CD4-positive, alpha-beta T cell (primary cell): ENCODE measurements at regions of chr5 and their contacts with region 1.

Region 1: GRCh38 chr5:131258733-131259132 is 5.1 kb upstream of the CDC42SE2 start:
- DNase-seq: no peak
- ATAC-seq: no peak
- H3K4me3 ChIP-seq: no peak overlapping the region
- H3K4me3 Mint-ChIP-seq: peak overlapping the region; percentile 70
- H3K27ac ChIP-seq: peak overlapping the region; percentile 58 to 66
- H3K27ac Mint-ChIP-seq: peak overlapping the region; percentile 90
- H3K4me1 ChIP-seq: peaks cover 57% of the 10 kb centered on the region
- H3K4me1 Mint-ChIP-seq: peaks cover 73% of the 10 kb centered on the region
- H3K27me3 ChIP-seq: no peaks in the 10 kb centered on the region
- H3K27me3 Mint-ChIP-seq: no peaks in the 10 kb centered on the region
- CTCF ChIP-seq: no peak

Region 2: DNA sequence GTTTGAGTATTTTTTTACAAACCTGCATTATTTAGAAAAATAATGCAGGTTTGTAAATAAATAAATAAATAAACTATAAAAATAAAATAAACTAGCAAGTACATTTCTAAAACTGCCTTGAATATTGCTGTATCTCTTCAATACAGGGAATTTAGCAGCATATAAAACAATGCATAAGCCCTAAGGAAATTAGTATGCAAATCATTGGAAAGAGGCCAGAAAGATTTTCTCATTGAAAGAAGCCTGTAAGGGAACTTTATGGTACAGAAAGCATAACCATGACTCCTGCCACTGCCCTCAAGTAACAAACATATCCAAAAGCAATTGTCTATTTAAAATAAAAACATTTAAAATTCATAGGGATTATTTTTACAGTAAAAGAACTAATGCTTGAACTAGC is 480.9 kb before region 1 on chr5:
- CTCF ChIA-PET with region 1: no interaction called
- POLR2A ChIA-PET with region 1: no interaction called
- intact Hi-C with region 1: no loop called
- DNase-seq: no peak
- ATAC-seq: no peak
- H3K4me3 ChIP-seq: no peak overlapping the region
- H3K4me3 Mint-ChIP-seq: no peak overlapping the region
- H3K27ac ChIP-seq: no peak overlapping the region
- H3K27ac Mint-ChIP-seq: no peak overlapping the region
- H3K4me1 ChIP-seq: no peaks in the 10 kb centered on the region
- H3K4me1 Mint-ChIP-seq: no peaks in the 10 kb centered on the region
- H3K27me3 ChIP-seq: peaks cover 0 to 7% of the 10 kb centered on the region in 2 experiments
- H3K27me3 Mint-ChIP-seq: peaks cover 40% of the 10 kb centered on the region
- CTCF ChIP-seq: no peak

Region 3: GRCh38 chr5:131218392-131218791 is 40.3 kb before region 1 on chr5:
- CTCF ChIA-PET with region 1: no interaction called
- POLR2A ChIA-PET with region 1: interaction called, 9 read pairs
- intact Hi-C with region 1: loop called in 1 of 2 experiments (anchors 5 kb)
- DNase-seq: no peak
- ATAC-seq: no peak
- H3K4me3 ChIP-seq: no peak overlapping the region
- H3K4me3 Mint-ChIP-seq: no peak overlapping the region
- H3K27ac ChIP-seq: no peak overlapping the region
- H3K27ac Mint-ChIP-seq: no peak overlapping the region
- H3K4me1 ChIP-seq: peaks cover 8% of the 10 kb centered on the region
- H3K4me1 Mint-ChIP-seq: peaks cover 36% of the 10 kb centered on the region
- H3K27me3 ChIP-seq: no peaks in the 10 kb centered on the region
- H3K27me3 Mint-ChIP-seq: no peaks in the 10 kb centered on the region
- CTCF ChIP-seq: no peak